ENCODE measurements at regions of chr15 and their contacts with region 1.

Region 1: DNA sequence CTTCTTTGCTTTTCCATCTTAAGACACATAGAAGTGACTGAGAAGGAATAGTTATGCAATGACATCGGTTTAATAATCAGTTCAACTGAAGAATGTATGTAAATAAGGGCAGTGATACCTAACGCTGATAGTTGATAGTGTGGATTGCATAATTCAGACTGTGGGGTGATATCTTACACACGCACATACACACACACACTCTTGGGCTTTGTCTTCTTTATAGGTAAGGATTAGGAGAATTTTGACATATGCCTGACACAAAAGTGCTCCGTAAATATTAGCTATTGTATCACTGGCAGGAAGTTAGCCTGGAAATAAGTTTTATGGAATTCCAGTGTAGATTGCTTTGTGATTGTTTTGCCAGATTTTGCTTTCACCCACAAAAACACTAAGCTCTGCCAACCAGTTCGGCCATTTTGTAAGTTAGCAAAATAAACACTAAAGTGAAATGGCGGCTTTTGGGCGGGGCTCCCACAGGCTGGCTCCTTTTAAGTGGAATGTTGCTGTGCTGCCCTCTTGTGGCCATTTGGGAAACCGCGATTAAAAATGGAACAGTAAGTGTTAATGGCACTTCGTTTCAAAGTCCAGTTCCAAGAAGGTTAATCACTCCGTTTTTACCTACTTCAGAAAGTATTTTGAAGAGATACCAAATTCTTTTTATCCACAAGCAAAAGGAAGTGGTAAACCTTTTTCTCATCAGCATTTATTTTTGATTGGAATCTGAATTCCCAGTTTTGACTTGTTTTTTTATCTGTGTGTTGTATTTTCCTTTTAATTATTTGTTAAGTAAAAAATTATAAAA is 17.7 kb downstream of the CHD2 start:
- DNase-seq: peak; percentile 94

Region 2: GRCh38 chr15:92930776-92931175 is 13.0 kb after region 1 on chr15:
- intact Hi-C with region 1: no loop called
- DNase-seq: no peak

Region 3: DNA sequence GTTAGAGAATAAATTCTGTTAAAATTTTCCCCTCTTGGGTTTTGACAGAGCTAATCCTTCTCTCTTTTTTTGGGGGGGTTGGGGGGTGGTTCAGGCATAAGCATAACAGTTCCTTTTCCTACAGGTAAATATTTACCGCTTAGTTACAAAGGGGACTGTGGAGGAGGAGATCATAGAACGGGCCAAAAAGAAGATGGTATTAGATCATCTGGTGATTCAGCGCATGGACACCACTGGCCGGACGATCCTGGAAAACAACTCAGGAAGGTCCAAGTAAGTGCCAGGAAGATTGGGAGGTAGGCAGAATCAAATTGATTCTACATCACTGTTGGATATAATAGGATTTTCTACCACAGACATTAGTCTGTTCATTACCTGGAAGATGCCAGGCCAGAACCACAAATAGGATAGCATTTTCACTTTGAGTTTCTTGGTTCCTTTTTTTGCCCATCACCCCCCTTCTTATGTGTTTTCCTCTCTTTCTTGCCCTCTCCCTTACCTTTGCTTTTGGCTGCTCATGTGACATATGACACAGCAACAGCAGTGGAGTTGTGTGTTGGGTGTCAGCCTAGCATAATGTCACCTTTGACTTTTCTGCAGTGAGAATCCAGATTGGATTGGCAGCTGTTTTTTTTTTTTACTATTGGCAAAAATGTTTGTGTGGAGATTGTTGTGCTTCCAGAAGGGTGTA is 61.3 kb after region 1 on chr15:
- intact Hi-C with region 1: loop called (anchors 10 kb)
- DNase-seq: no peak

Measured in cardiac septum (tissue), 1 donor.